ENCODE measurements at regions of chr11 and their contacts with region 1.

Region 1: DNA sequence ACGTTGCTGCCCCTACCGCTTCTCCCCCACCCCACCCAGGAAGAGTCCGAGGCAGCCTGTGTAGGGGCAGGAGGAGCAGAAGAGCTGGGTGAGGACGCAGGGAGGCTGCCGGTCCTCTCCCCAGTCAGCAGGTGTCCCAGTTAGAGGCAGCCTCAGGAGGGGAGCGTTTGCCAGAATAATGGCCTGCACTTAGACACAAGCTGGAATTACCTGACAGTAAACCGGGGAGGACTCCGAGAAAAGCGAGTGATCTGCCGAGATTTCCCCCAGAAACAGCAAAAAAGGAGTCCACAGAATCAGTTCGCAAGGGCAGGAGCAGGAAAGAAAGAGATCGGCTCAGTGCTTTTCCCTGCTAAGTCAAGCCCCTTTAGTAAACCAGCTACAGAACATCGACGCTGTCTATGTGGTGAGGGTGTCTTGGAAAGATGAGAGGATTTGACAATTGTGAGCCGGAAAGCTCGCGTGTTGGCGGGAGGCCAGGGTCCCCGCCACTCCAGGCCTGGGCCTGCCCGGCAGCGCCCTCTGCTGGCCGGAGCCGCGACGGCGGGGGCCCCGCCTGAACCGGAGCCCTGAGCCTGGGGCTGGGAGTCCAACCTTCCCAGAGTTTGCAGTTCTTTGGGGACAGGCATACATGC is 17.7 kb upstream of the THRSP start:
- H3K4me3 ChIP-seq: no peak overlapping the region
- H3K27ac ChIP-seq: no peak overlapping the region
- H3K4me1 ChIP-seq: no peaks in the 10 kb centered on the region
- CTCF ChIP-seq: peak; percentile 84

Region 2: GRCh38 chr11:77770629-77771028 is 275.3 kb before region 1 on chr11:
- CTCF ChIA-PET with region 1: interaction called, 11 read pairs
- POLR2A ChIA-PET with region 1: no interaction called
- H3K4me3 ChIP-seq: no peak overlapping the region
- H3K27ac ChIP-seq: no peak overlapping the region
- H3K4me1 ChIP-seq: peaks cover 3% of the 10 kb centered on the region; the same call in 1 of the 2 replicates
- CTCF ChIP-seq: no peak

Region 3: GRCh38 chr11:78000193-78000592 is 45.8 kb before region 1 on chr11:
- CTCF ChIA-PET with region 1: interaction called, 17 read pairs
- POLR2A ChIA-PET with region 1: interaction called, 15 read pairs
- H3K4me3 ChIP-seq: no peak overlapping the region
- H3K27ac ChIP-seq: no peak overlapping the region
- H3K4me1 ChIP-seq: no peaks in the 10 kb centered on the region
- CTCF ChIP-seq: peak; percentile 57; the same call in 1 of the 2 replicates

Region 4: DNA sequence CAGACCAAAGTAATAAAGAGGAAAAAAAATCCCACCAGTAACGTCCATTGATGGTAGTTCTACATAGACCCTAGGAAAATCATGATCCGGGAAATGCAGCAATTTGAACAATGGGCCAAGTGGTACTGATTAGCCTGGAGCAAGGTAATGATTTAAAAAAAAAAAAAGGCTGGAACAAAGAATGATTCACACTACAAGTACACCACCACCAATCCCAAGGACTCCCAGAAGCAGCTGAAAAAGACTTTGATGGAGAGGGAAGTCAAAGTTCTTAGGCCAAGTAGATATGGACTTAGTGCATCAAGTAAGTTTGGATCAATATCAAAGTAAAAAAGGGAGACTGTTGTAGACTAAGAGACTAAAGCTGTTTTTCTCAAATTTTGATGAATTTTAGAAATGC is 34.7 kb before region 1 on chr11:
- CTCF ChIA-PET with region 1: interaction called, 13 read pairs
- POLR2A ChIA-PET with region 1: no interaction called
- H3K4me3 ChIP-seq: no peak overlapping the region
- H3K27ac ChIP-seq: no peak overlapping the region
- H3K4me1 ChIP-seq: no peaks in the 10 kb centered on the region
- CTCF ChIP-seq: no peak

Region 5: DNA sequence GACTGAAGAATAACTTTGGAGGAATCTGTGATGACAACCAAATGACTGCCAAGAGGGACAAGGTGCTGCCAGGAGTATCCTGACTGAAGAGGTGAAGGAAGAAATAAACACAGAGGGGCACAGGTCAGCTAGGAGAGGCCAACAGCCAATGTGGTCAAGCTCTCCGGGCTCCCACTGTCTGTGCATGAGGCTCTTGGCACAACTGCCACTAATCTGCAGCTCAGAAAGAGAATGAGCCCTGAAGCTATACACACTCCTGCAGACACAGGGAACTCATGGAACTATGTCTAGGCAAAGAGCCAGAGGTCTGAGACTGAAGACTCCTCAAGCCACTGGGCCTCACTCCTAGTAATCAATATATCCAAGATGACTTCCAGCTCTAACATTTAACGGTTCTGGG is 24.7 kb after region 1 on chr11:
- CTCF ChIA-PET with region 1: interaction called, 10 read pairs
- POLR2A ChIA-PET with region 1: no interaction called
- H3K4me3 ChIP-seq: no peak overlapping the region
- H3K27ac ChIP-seq: no peak overlapping the region
- H3K4me1 ChIP-seq: no peaks in the 10 kb centered on the region
- CTCF ChIP-seq: no peak